Left ventricle myocardium superior (tissue), 1 donor: ENCODE measurements at regions of chr4 and their contacts with region 1.

Region 1: DNA sequence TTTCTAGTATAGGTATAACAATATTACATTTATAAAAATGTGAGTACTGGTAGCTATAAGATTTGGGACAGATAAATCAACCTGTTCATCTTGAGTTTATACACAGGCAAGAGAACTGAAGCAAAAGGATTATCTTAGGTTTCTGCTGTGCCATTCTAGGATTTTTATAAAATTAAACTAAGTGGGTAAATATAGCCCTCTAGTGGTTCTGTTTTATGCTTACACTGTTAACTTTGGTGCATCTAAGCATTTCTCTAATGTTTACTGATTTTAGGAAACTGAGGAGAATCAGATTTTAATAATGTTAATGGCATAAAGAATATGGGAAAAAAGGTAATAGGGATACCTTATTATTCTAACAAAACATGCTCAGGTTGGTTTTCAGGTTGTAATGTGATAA is 1.1 kb upstream of the RRH start:
- DNase-seq: no peak
- ATAC-seq: no peak

Region 2: DNA sequence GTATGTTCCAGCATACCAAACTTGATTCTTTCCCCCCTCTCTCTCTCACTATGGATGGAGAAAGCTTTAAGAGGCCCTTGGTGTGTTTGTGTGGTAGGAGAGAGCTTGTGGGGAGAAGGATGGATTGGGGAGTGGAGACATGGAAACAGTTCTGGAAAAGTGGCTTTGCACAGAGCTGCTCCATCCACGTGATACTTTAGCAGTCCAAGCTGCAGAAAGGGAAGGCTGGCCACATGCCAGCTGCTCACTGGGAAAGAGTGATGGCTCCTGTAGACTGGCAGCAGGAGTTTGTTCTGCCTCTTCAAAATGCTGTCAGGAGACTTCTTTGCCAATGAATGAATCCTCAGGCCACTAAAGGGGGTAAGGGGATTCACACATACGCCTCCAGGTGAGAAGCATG is 414.8 kb before region 1 on chr4:
- intact Hi-C with region 1: loop called (anchors 10 kb)
- DNase-seq: peak; percentile 84
- ATAC-seq: peak; percentile 87

Region 3: DNA sequence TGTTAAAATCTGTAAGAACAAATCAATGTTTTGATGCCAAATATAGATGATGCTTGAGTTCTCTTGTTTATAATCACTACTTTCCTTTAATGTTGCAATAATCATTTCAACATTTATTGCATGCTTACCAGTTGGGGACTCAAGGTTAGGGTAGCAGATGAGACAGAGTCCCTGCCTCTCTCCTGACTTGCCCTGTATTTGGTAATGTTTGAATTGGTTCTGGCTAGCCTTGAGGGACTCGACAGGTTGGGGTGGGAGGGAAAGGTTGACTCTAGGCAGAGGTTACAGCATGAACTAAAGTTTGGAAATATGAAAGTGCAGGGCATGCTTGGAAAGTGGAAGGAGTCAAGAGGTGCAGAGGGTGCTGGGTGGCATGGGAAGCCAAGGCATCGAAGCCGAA is 391.1 kb before region 1 on chr4:
- intact Hi-C with region 1: loop called (anchors 5 kb)
- DNase-seq: no peak
- ATAC-seq: no peak

Region 4: GRCh38 chr4:109846395-109847098 is 19.8 kb after region 1 on chr4:
- intact Hi-C with region 1: no loop called
- DNase-seq: no peak
- ATAC-seq: no peak

Region 5: GRCh38 chr4:109879118-109879517 is 52.4 kb after region 1 on chr4:
- intact Hi-C with region 1: no loop called
- DNase-seq: peak; percentile 29
- ATAC-seq: no peak